AG04449 (cell line): ENCODE measurements at regions of chr7 and their contacts with region 1.

Region 1: GRCh38 chr7:100469227-100470044 is 5.4 kb upstream of the SPACDR start:
- DNase-seq: no peak
- H3K4me3 ChIP-seq: no peak overlapping the region
- CTCF ChIP-seq: peak; percentile 98

Region 2: DNA sequence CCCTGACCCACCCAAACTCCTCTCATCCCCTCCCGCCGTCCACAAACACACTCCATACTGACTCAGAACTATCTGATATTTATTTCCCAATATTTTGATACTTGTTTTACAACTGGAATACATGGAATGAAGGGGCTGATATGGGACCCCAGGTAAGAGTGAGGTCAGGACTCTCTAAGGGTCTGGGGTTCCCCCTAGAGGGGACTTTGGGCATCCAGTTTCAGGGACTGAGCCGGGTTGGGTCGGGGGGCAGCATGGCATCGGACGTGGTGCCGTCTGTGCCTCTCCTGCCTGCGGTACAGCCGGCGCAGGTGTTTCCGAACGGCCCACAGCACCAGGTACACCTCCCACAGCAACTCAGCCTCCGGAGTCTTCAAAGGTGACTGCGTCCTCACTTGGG is 12.9 kb before region 1 on chr7:
- CTCF ChIA-PET with region 1: interaction called, 152 read pairs
- POLR2A ChIA-PET with region 1: interaction called, 4 read pairs
- DNase-seq: no peak
- H3K4me3 ChIP-seq: no peak overlapping the region
- CTCF ChIP-seq: no peak

Region 3: DNA sequence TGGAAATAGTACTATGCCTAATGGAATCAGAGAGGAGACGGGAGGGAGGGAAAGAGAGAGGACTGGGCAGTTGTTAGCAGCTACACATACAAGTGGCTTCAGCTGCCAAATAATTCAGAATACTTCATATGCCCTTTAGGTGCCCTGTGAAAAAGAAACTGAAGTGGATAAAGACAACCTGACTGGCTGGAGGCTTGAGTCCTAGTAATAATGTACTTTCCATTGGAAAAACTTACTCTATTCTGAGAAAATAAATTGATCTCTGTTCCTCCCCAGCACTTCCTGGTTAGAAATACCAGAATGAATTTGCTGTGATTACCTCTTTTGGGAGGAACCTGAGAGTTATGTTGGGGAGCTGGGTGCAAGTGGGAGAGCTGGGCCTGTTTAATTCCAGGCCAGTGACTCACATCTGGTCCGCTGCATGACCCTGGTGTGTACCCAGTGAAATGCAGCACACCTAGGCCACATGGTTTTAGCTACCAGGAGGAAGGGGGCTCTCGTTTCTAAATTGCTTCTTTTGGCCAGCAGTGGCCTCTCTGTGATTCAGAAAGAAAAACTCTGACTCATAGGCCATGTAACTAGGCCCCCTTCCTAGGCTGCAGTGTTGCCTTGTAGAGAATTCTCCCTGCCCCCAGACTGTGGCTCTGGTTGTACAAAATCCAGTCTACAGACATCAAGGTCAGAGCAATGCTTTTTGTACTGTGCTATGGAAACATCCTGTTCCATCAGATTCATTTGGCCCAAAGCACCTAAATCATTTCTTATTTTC is 76.1 kb after region 1 on chr7:
- CTCF ChIA-PET with region 1: interaction called, 36 read pairs
- POLR2A ChIA-PET with region 1: no interaction called
- DNase-seq: peak; percentile 41
- H3K4me3 ChIP-seq: no peak overlapping the region; the same call in 1 of the 2 replicates
- CTCF ChIP-seq: no peak

Region 4: DNA sequence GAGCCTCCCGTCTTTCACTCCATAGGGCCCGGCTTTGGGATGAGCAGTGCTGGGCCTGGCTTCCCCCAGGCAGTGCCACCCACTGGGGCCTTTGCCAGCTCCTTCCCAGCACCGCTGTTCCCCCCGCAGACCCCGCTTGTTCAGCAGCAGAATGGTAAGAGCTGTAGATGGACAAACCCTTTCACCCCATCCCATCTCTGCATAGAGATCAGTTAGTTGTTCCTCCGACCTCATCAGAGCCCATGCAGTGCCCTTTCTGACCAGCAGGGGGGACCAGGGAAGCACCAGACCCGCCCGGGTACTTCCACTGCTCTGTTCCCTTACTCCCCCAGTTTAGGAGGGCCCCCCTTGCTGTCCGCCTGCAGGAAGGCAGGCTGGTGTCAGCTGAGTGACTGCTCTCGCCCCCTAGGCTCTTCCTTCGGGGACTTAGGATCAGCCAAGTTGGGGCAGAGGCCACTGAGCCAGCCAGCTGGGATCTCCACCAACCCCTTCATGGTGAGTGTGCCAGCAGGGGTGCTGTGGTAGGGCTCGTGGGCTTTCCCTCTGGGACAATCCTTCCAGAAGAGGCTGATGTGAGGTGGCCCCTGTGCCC is 94.5 kb after region 1 on chr7:
- CTCF ChIA-PET with region 1: interaction called, 421 read pairs
- POLR2A ChIA-PET with region 1: no interaction called
- DNase-seq: no peak
- H3K4me3 ChIP-seq: no peak overlapping the region
- CTCF ChIP-seq: peak; percentile 92